GM13977 (cell line): ENCODE measurements at regions of chr6 and their contacts with region 1.

Region 1: DNA sequence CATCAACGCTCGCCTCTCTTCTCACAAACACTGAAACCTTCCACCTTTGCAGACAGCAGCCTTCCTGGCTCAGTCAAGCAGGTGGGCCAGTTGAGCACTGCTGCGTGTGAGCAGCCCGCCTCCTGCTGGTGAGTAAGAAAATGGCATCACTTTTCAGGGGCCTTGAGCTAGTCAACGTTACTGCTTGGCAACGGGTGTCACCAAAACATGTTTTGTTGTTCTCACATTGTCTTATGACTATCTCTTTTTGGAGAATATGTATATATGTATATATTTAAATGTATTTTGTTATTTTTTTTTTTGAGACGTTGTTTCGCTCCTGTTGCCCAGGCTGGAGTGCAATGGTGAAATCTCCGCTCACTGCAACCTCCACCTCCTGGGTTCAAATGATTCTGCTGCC is 97.0 kb upstream of the AGPAT4 start:
- DNase-seq: peak; percentile 84
- CTCF ChIP-seq: peak; percentile 95

Region 2: DNA sequence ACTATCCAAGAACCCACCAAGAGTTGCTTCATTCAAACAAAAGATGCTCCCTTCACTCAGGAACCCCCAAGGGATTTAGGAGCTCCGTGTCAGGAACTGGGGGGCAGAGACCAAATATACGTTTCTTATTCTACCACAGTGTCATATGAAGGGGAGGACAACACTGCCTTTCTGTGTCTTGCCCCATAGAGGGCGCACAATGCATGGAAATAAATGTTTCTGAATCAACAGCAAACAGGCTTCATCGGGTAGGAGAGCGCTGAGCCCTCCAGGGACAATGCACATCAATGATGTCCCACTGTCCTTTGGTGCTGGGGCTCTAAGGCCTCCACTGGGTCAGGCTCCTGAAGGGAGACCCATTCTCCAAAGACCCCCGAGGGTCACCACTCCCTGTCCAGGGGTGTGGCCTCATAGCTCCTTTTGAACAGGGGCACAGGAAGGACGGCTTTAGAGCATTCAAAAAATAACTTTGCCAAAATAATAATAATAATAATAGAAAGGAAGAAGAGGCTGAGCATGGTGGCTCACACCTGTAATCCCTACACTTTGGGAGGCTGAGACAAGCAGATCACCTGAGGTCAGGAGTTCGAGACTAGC is 637.7 kb before region 1 on chr6:
- in situ Hi-C with region 1: loop called (anchors 25 kb)
- DNase-seq: peak; percentile 34
- CTCF ChIP-seq: peak; percentile 88

Region 3: GRCh38 chr6:160930547-160931377 is 440.1 kb before region 1 on chr6:
- in situ Hi-C with region 1: loop called (anchors 5 kb)
- DNase-seq: peak; percentile 85
- CTCF ChIP-seq: peak; percentile 95

Region 4: DNA sequence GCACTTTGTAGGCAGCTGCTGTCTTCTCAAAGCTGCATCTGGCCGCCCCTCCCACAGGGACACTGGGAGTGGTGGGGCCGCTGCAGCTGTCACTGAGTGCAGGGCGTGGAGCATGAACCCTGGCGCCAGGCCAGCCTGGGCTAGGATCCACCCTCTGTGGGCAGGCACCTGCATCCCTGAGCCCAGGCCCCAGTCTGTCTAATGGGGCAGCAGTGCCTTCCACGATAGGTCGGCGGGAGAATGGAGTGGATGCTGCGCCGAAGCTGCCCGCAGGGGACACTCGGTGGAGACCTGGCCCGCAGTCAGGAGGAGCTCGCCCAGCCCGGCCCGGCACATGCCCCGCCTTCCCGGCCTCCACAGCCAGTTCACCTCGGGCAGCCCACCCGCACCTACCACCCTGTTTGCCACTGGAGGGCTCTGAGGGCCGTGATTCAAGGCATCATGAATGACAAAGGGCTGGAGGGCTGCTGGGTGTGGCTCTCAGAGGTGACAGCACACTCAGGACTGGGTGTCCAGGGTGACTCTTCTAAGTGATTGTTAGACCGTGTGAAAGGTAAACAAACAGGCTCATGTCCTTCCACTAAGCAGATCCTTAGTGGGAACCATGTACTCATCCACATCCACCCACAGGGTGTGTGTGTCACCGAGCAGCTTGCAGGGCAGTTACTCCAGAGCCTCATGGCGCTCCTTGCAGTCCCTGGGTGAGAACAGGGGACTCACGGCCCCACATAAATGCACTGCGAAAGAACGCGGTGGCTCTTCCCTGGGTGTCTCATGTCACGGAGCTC is 230.9 kb before region 1 on chr6:
- in situ Hi-C with region 1: loop called (anchors 25 kb)
- DNase-seq: no peak
- CTCF ChIP-seq: no peak